ENCODE measurements at regions of chr3 and their contacts with region 1.

Region 1: GRCh38 chr3:149273096-149273751 is 51.6 kb upstream of the CP start:
- DNase-seq: peak; percentile 86
- H3K4me3 ChIP-seq: no peak overlapping the region
- H3K27ac ChIP-seq: no peak overlapping the region
- H3K4me1 ChIP-seq: peaks cover 3% of the 10 kb centered on the region
- H3K27me3 ChIP-seq: no peaks in the 10 kb centered on the region
- CTCF ChIP-seq: peak; percentile 78 to 91
- POLR2A ChIP-seq: no peak

Region 2: DNA sequence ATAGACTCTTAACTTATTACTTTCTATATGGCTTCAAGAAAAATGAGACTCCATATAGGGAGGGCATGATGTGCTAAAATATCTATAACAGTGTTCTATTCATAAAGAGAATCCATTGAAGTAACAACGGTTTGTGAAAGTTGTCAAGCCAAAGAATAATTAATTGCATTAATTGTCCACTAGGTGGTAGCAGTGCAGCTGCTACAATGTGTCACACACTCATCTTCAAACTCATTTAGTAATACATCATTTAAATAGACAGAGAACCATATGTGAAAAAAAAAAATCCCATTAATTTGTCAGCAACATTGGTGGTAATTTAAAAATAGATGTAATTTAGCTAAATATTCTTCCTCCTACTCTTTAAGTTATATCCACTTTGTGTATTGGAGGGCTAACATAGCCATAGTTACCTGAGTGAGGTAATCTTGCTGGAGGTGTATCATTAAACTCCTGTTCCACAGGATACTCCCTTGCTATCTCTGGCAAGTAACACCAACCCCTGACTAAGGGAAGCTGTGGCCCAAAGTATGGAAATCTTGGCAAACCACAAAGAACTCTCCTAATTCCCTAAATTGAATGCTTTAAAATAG is 411.9 kb before region 1 on chr3:
- CTCF ChIA-PET with region 1: no interaction called
- POLR2A ChIA-PET with region 1: no interaction called
- dilution Hi-C with region 1: no loop called
- intact Hi-C with region 1: loop called (anchors 5 kb)
- DNase-seq: peak; percentile 60
- H3K4me3 ChIP-seq: no peak overlapping the region
- H3K27ac ChIP-seq: no peak overlapping the region
- H3K4me1 ChIP-seq: no peaks in the 10 kb centered on the region
- H3K27me3 ChIP-seq: peaks cover 18 to 28% of the 10 kb centered on the region in 2 experiments
- CTCF ChIP-seq: peak; percentile 30 to 46
- POLR2A ChIP-seq: no peak

Region 3: GRCh38 chr3:149129326-149130205 is 143.7 kb before region 1 on chr3 and contains the start of gene HPS3:
- CTCF ChIA-PET with region 1: interaction called, 5 read pairs
- POLR2A ChIA-PET with region 1: no interaction called
- dilution Hi-C with region 1: no loop called
- intact Hi-C with region 1: loop called (anchors 2 kb)
- DNase-seq: peak; percentile 91
- H3K4me3 ChIP-seq: peak within 1 kb of the TSS; percentile 53 to 85 (median 82)
- H3K27ac ChIP-seq: peak within 1 kb of the TSS; percentile 30
- H3K4me1 ChIP-seq: peaks cover 7% of the 10 kb centered on the region
- H3K27me3 ChIP-seq: peaks cover 0 to 1% of the 10 kb centered on the region in 2 experiments
- CTCF ChIP-seq: no peak
- POLR2A ChIP-seq: peak; percentile 91
- total RNA-seq, gene HPS3: 16.1 and 17.8 TPM in 2 replicates

Region 4: DNA sequence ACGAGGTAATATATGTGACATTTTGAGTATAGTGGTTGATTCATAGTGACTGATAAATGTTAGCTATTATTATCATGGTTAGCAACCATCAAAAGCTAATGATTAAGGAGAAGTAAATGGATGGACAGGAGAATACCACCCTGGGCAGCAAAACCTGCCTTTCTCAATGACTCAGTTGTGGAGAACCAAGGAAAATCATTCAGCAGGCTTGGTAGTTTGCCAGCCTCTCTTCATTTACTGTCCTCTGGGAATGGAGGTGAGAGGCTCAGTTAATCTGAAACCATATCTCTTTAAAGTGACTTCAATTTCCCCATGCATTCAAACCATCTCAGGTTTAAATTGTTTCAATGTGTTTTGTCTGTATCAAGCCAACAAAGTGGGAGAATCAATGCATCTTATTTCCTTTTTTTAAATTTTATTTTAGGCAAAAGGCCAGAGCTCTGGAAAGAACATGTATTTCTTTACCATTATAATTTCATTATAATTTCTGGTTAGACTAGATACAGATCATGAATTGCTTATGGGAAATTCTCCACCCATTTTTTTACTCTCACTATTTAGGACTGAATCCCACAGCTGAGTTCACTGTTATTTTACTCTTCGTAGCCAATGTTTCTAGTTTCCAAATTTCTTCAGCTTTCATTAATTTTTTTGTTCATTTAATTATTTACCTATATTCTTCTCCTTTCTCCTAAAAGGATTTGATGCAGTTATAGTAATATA is 57.5 kb after region 1 on chr3:
- CTCF ChIA-PET with region 1: interaction called, 13 read pairs
- POLR2A ChIA-PET with region 1: no interaction called
- dilution Hi-C with region 1: no loop called
- intact Hi-C with region 1: loop called (anchors 1 kb)
- DNase-seq: no peak
- H3K4me3 ChIP-seq: peak overlapping the region in 1 of 3 experiments; percentile 92
- H3K27ac ChIP-seq: peak overlapping the region; percentile 92
- H3K4me1 ChIP-seq: peaks cover 54% of the 10 kb centered on the region
- H3K27me3 ChIP-seq: no peaks in the 10 kb centered on the region
- CTCF ChIP-seq: no peak
- POLR2A ChIP-seq: no peak

Region 5: DNA sequence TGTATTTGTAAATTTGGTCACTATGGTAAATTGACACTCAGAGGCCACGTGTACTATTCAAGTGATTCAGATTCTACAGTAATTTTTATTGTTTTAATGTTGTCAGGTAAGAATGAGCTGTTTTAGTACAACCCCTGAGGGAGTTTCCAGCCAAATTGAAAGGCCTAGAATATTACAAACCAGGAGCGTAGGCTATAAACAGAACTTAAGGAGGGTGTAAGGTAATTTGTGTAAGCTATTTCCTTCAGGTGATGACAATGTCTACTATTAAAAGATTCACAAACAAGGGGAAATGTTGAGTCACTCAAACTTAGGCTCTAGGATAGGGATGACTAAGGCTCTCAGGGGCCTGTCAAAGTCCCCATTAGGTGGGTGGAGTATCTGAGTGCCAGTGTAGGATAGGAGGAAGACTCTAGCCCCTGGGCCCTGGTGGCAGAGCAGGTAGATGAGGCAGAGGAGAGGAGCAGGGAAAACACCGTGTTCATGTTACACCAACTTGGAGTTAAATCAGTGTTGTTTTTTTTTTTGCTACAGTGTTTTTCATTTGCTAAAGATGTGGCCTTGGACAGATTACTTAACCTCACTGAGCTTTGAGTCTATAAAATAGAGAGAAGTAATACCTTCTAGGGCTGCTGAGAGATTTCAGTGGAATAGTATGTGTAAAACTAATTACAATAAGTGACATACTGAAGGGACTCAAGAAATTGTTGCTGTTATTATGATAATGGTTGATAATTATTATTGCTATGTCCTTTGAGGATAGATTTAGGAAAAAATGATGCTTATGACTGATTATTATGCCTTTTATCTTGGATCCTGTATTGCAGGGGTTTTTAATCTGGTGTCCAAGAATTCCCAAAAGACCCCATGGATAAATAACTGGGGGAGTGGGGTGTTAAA is 94.0 kb after region 1 on chr3:
- CTCF ChIA-PET with region 1: no interaction called
- POLR2A ChIA-PET with region 1: no interaction called
- dilution Hi-C with region 1: no loop called
- intact Hi-C with region 1: loop called (anchors 1 kb)
- DNase-seq: peak; percentile 90
- H3K4me3 ChIP-seq: no peak overlapping the region
- H3K27ac ChIP-seq: peak overlapping the region; percentile 39
- H3K4me1 ChIP-seq: peaks cover 52% of the 10 kb centered on the region
- H3K27me3 ChIP-seq: no peaks in the 10 kb centered on the region
- CTCF ChIP-seq: no peak
- POLR2A ChIP-seq: peak; percentile 61

Region 6: DNA sequence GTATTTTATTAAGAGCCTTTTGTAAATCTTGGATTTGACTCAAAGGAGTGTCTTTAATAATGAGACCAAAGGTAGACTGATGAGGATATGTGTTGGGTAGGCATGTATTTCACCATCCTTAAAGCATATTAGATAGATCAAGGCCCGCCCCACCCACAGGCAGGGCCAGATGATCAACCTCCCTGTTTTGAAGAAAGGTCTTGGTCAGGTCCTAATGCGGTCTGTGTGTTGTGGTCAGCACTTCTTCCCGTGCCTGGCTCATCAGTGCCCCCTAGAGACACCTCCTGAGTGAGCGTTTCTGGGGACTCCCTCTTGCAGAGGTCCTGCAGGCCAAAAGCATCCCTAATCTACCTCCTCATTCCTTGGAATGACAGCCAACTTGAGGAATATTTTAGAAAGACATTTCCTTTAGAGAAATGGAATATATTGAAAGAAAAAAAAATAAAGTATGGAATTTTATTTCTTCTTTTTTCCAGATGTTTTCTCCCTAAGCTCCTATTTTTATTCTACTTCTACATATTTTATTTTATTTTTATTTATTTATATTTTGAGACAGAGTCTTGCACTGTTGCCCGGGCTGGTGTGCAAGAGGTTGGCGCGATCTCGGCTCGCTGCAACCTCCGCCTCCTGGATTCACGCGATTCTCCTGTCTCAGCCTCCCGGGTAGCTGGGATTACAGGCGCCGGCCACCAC is 207.2 kb after region 1 on chr3:
- CTCF ChIA-PET with region 1: interaction called, 5 read pairs
- POLR2A ChIA-PET with region 1: no interaction called
- dilution Hi-C with region 1: no loop called
- intact Hi-C with region 1: loop called (anchors 1 kb)
- DNase-seq: peak; percentile 93
- H3K4me3 ChIP-seq: no peak overlapping the region
- H3K27ac ChIP-seq: peak overlapping the region; percentile 64
- H3K4me1 ChIP-seq: peaks cover 12% of the 10 kb centered on the region
- H3K27me3 ChIP-seq: no peaks in the 10 kb centered on the region
- CTCF ChIP-seq: peak; percentile 91 to 93
- POLR2A ChIP-seq: no peak

Measured in endothelial cell of umbilical vein (primary cell).